ENCODE measurements at regions of chr7 and their contacts with region 1.

Region 1: DNA sequence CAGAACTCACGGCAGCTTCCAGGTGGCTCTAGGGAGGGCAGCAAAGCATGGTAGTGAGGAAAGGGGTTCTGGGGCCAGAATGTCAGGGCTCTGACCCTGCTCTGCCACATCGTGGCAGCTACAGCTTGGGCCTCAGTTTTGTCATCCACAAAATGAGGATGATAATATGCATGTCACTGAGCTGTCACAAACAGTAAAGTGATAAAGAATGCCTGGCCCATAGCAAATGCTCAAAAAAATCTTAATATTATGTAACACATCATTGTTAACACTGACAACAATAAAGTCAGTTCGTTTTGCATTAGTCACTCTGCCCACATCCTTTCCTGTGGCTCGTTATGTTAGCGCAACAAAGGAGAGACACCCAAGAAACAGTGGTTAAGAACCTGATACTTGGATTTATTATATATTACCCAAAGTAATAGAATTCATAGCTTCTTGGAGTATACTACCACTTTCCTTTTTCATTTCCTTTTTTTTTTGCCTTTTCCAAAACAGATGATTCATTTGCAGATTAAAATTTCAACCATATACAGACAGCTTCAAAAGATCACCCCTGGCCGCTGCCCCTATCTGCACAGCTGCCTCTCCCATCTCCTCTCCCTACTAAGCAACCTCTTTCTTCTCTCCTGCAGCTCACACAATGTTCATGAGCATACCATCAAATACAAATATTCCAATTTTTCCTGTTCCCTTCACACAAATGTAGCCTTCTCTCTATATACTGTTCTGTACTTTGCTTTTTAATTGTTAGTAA is 45.5 kb upstream of the DDC start:
- DNase-seq: no peak
- H3K4me3 ChIP-seq: no peak overlapping the region
- H3K27ac ChIP-seq: no peak overlapping the region
- H3K4me1 ChIP-seq: no peaks in the 10 kb centered on the region
- H3K27me3 ChIP-seq: no peaks in the 10 kb centered on the region
- CTCF ChIP-seq: no peak

Region 2: GRCh38 chr7:50544992-50545391 is 65.7 kb before region 1 on chr7:
- intact Hi-C with region 1: no loop called
- DNase-seq: no peak
- H3K4me3 ChIP-seq: no peak overlapping the region
- H3K27ac ChIP-seq: no peak overlapping the region
- H3K4me1 ChIP-seq: no peaks in the 10 kb centered on the region
- H3K27me3 ChIP-seq: no peaks in the 10 kb centered on the region
- CTCF ChIP-seq: no peak

Region 3: GRCh38 chr7:50632561-50633413 is 22.1 kb after region 1 on chr7:
- intact Hi-C with region 1: no loop called
- DNase-seq: peak in 1 of 2 donors; percentile 60
- H3K4me3 ChIP-seq: no peak overlapping the region
- H3K27ac ChIP-seq: no peak overlapping the region
- H3K4me1 ChIP-seq: peaks cover 0 to 50% (median 20%) of the 10 kb centered on the region in 4 donors
- H3K27me3 ChIP-seq: no peaks in the 10 kb centered on the region
- CTCF ChIP-seq: peak in 1 of 2 experiments; percentile 50

Region 4: GRCh38 chr7:50679218-50680007 is 68.7 kb after region 1 on chr7:
- intact Hi-C with region 1: loop called (anchors 10 kb)
- DNase-seq: no peak
- H3K4me3 ChIP-seq: no peak overlapping the region
- H3K27ac ChIP-seq: no peak overlapping the region
- H3K4me1 ChIP-seq: peaks cover 0 to 53% (median 36%) of the 10 kb centered on the region in 4 donors
- H3K27me3 ChIP-seq: no peaks in the 10 kb centered on the region
- CTCF ChIP-seq: peak; percentile 33 to 50

Measured in tibial artery (tissue), 4 donors.